Endothelial cell of umbilical vein (primary cell): ENCODE measurements at regions of chr15 and their contacts with region 1.

Region 1: GRCh38 chr15:45457641-45458433 is 64.7 kb downstream of the SLC30A4 start:
- DNase-seq: peak; percentile 86
- H3K4me3 ChIP-seq: peak overlapping the region; percentile 36 to 65 (median 44)
- H3K27ac ChIP-seq: peak overlapping the region; percentile 58
- H3K4me1 ChIP-seq: peaks cover 12% of the 10 kb centered on the region
- H3K27me3 ChIP-seq: no peaks in the 10 kb centered on the region
- CTCF ChIP-seq: peak; percentile 45 to 63
- POLR2A ChIP-seq: no peak

Region 2: DNA sequence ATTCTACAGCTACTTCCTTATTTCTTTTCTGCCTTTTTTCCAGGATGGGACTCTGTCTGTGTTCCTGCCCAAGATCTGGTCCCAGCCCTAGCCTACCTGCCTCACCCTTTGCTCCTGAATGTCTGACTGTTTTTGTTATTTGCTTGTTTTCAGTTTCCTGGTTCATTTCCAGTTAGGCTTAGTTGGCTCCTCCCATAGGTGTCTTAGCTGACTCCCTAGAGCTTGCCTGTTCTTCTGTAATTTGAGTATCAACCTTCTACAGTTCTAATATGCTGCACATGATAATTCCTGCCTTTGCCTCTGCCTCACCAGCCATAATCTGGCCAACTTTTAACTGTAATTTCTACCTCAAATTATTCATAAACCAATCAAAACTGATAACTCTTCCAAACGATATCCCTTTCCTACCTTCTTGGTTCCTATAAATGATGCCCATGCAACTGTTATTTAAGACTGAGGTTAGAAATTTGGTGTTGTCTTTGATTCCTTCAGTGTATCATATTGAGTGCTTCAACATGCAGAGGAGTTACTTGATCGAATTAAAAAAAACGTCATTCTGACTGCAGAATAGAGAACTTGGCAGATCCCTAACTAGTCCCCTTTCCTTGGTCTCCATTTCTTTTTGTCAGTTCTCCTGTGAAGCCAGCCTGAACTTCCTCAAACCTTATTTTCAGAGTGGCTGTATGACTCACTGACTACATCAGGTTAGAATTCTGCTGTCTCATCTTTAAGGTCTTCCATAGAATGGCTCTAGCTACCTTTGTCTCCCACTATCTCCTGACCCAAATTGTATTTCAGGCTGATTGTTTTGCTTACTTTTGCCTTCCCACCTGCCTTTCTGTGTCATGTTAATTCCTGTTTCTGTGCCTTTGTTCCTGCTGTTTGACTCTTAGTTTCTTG is 1161.0 kb before region 1 on chr15:
- CTCF ChIA-PET with region 1: no interaction called
- POLR2A ChIA-PET with region 1: no interaction called
- dilution Hi-C with region 1: no loop called
- intact Hi-C with region 1: no loop called
- DNase-seq: peak; percentile 18
- H3K4me3 ChIP-seq: no peak overlapping the region
- H3K27ac ChIP-seq: no peak overlapping the region
- H3K4me1 ChIP-seq: peaks cover 5% of the 10 kb centered on the region
- H3K27me3 ChIP-seq: no peaks in the 10 kb centered on the region
- CTCF ChIP-seq: no peak
- POLR2A ChIP-seq: no peak

Region 3: GRCh38 chr15:45126535-45127158 is 331.2 kb before region 1 on chr15:
- CTCF ChIA-PET with region 1: interaction called, 9 read pairs
- POLR2A ChIA-PET with region 1: no interaction called
- dilution Hi-C with region 1: no loop called
- intact Hi-C with region 1: loop called (anchors 1 kb)
- DNase-seq: peak; percentile 37
- H3K4me3 ChIP-seq: no peak overlapping the region
- H3K27ac ChIP-seq: no peak overlapping the region
- H3K4me1 ChIP-seq: peaks cover 6% of the 10 kb centered on the region
- H3K27me3 ChIP-seq: peaks cover 57 to 77% of the 10 kb centered on the region in 2 experiments
- CTCF ChIP-seq: peak; percentile 44 to 50
- POLR2A ChIP-seq: no peak

Region 4: DNA sequence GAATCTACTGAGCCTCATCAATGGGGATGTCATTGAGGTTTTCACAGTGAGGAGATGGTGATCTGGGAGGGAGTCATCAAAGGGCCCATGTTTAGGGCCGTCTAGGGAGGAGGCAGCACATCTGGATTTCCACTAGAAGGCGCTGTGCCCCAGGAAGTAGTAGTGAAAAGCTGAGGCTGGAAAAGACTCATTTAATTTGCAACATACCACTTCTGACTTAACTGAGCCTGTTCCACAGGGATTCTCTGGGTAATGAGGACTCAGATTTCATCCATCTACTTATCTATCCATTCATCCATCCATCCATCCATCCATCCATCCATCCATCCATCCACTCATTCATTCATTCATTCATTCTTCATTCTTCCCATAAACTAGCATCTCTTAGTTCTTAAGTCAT is 252.6 kb before region 1 on chr15:
- CTCF ChIA-PET with region 1: interaction called, 3 read pairs
- POLR2A ChIA-PET with region 1: no interaction called
- dilution Hi-C with region 1: no loop called
- intact Hi-C with region 1: loop called (anchors 1 kb)
- DNase-seq: peak; percentile 33
- H3K4me3 ChIP-seq: no peak overlapping the region
- H3K27ac ChIP-seq: no peak overlapping the region
- H3K4me1 ChIP-seq: peaks cover 3% of the 10 kb centered on the region
- H3K27me3 ChIP-seq: peaks cover 9 to 12% of the 10 kb centered on the region in 2 experiments
- CTCF ChIP-seq: peak; percentile 73 to 88
- POLR2A ChIP-seq: no peak

Region 5: DNA sequence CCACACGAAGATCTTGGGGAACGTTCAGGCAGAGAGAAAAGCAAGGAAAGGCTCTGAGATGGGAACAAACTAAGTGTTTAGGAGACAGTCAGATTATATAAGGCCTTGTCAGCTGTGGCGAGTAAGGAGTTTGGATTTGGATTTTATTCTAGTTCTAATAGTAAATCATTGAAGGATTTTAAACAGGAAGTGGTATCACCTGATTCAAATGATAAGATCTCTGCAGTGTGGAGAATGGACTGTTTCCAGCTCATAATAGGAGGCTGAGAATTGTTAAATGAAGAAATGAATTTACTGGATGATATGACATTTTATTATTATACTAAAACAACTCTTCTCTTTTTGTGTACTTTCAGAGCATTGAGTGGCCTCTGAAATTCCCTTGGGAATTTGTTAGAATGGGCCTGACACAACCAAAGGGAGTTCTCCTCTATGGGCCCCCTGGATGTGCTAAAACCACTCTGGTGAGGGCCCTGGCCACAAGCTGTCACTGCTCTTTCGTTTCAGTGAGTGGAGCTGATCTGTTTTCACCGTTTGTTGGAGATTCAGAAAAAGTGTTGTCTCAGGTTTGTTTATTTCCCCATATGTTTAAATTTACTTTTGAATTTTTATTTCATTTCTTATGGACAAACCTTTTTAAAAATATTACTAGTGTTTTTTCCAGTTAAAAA is 43.5 kb before region 1 on chr15:
- CTCF ChIA-PET with region 1: interaction called, 16 read pairs
- POLR2A ChIA-PET with region 1: no interaction called
- dilution Hi-C with region 1: no loop called
- intact Hi-C with region 1: no loop called
- DNase-seq: no peak
- H3K4me3 ChIP-seq: no peak overlapping the region
- H3K27ac ChIP-seq: no peak overlapping the region
- H3K4me1 ChIP-seq: peaks cover 9% of the 10 kb centered on the region
- H3K27me3 ChIP-seq: no peaks in the 10 kb centered on the region
- CTCF ChIP-seq: no peak
- POLR2A ChIP-seq: no peak

Region 6: GRCh38 chr15:45429974-45430792 is 27.7 kb before region 1 on chr15:
- CTCF ChIA-PET with region 1: interaction called, 118 read pairs
- POLR2A ChIA-PET with region 1: no interaction called
- dilution Hi-C with region 1: no loop called
- intact Hi-C with region 1: loop called (anchors 1 kb)
- DNase-seq: peak; percentile 50
- H3K4me3 ChIP-seq: peak overlapping the region in 2 of 3 experiments; percentile 32 to 55
- H3K27ac ChIP-seq: no peak overlapping the region
- H3K4me1 ChIP-seq: peaks cover 5% of the 10 kb centered on the region
- H3K27me3 ChIP-seq: peaks cover 2 to 14% of the 10 kb centered on the region in 2 experiments
- CTCF ChIP-seq: peak; percentile 100
- POLR2A ChIP-seq: no peak

Region 7: DNA sequence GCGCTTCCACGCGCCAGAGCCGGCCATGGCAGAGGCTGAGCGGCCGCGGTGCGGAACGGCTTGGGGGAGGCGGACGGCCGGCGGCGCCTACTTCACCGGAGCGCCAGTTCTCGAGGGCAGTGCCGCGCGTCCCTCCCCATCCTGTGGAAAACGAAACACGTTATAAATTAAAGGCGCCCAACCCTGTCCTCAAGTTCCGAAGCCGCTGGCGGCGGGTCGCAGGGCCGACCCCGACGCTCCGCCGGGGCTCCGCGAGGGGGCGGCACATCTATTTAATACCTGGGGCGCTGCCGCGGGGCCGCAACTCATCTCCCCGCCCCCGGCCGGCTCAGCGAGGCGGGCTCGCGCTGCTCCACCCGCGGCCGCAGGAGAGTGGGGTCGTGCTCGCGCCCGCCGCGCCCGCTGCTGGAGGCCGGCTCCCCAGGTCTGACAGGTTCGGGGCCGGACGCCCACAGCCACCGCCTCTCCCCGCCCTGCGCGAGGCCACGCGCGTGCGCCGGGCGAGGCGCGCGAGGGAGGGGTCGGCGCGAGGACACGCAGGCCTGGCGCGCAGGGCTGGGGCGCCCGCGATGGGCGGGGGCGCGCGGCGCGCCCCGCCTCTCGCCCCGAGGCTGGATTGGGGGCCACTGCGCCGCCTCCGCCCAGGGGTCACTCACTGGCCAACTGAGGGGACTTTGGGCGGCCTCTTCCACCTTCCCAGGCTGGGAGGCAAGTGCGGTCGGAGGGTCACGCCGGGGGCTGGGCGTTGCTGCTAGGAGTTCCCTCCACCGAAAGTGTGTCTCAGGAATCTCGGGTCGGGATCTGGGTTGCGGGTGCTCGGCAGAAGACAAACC is 64.7 kb after region 1 on chr15 and contains the start of gene SLC30A4:
- CTCF ChIA-PET with region 1: no interaction called
- POLR2A ChIA-PET with region 1: no interaction called
- dilution Hi-C with region 1: no loop called
- intact Hi-C with region 1: loop called (anchors 1 kb)
- DNase-seq: peak; percentile 68
- H3K4me3 ChIP-seq: peak within 1 kb of the TSS; percentile 53 to 90 (median 60)
- H3K27ac ChIP-seq: no peak within 1 kb of the TSS
- H3K4me1 ChIP-seq: peaks cover 9% of the 10 kb centered on the region
- H3K27me3 ChIP-seq: peaks cover 0 to 3% of the 10 kb centered on the region in 2 experiments
- CTCF ChIP-seq: peak; percentile 12 to 49
- POLR2A ChIP-seq: no peak
- total RNA-seq, gene SLC30A4: 3.8 and 3.9 TPM in 2 replicates

Region 8: DNA sequence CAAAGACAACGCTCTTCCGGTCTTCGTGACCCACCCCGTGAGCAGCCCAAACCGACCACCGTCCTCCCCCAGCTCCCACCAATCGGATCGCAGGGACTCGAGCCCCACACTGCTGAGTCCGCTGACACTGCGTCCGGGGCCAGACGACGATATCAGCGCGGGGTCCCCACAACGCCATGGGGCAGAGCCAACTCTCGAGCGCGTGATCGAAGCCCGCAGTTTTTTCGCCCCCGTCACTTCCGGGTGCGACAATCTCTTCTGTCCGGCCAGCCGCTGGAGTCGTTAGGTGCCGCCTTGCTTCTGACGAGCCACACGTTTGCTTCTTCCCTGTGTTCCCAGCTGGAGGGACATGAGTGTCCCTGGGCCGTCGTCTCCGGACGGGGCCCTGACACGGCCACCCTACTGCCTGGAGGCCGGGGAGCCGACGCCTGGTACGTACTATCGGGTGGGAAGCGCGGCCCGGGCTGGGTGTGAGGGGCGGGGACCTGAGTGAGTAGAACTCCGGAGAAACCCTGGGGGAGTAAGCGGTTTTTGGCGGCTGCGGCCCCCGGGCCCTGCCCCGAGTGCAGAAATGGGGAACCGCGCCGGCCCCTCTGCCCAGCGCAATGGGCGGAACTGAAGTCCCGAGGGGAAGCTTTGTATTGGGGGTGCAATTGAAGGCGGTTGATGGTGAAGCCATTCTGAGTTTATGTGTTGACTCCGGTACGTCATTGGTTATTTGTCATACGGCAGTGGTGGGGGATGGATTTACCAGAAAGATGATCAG is 129.4 kb after region 1 on chr15 and contains the start of gene BLOC1S6:
- CTCF ChIA-PET with region 1: interaction called, 30 read pairs
- POLR2A ChIA-PET with region 1: no interaction called
- dilution Hi-C with region 1: no loop called
- intact Hi-C with region 1: loop called (anchors 1 kb)
- DNase-seq: peak; percentile 92
- H3K4me3 ChIP-seq: peak within 1 kb of the TSS; percentile 89 to 98 (median 90)
- H3K27ac ChIP-seq: peak within 1 kb of the TSS; percentile 83
- H3K4me1 ChIP-seq: peaks cover 29% of the 10 kb centered on the region
- H3K27me3 ChIP-seq: peaks cover 0 to 2% of the 10 kb centered on the region in 2 experiments
- CTCF ChIP-seq: no peak
- POLR2A ChIP-seq: peak; percentile 89
- total RNA-seq, gene BLOC1S6: 39.2 and 43.4 TPM in 2 replicates

Region 9: DNA sequence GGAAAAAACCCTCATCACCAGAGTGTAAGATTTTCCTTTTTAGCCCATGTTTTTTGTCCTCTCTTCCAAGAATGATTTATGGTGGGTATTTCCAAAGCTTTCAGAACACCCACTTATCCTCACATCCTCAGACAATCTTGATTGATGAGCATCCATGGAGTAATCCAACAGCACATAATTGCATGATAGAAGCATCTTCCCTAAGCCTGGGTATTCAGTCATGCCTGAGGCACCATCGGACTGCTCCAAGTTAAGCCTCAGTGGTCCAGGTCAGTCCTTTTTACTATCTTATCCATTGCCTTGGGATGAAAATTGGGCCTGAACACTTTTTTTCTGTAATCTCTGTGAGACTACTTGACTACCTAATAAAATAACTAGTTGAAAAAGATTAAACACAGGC is 1583.5 kb after region 1 on chr15:
- CTCF ChIA-PET with region 1: no interaction called
- POLR2A ChIA-PET with region 1: no interaction called
- dilution Hi-C with region 1: no loop called
- intact Hi-C with region 1: no loop called
- DNase-seq: no peak
- H3K4me3 ChIP-seq: no peak overlapping the region
- H3K27ac ChIP-seq: no peak overlapping the region
- H3K4me1 ChIP-seq: no peaks in the 10 kb centered on the region
- H3K27me3 ChIP-seq: peaks cover 0 to 1% of the 10 kb centered on the region in 2 experiments
- CTCF ChIP-seq: no peak
- POLR2A ChIP-seq: no peak